ENCODE measurements at regions of chr6 and their contacts with region 1.

Region 1: GRCh38 chr6:156963712-156964700 is 186.8 kb downstream of the ARID1B start:
- DNase-seq: peak; percentile 30
- ATAC-seq: peak; percentile 90
- H3K4me3 ChIP-seq: no peak overlapping the region
- H3K27ac ChIP-seq: no peak overlapping the region; the same call in 1 of the 2 replicates
- H3K4me1 ChIP-seq: peaks cover 11% of the 10 kb centered on the region
- H3K27me3 ChIP-seq: no peaks in the 10 kb centered on the region
- CTCF ChIP-seq: no peak
- EP300 ChIP-seq: no peak
- POLR2A ChIP-seq: no peak
- RAD21 ChIP-seq: no peak

Region 2: DNA sequence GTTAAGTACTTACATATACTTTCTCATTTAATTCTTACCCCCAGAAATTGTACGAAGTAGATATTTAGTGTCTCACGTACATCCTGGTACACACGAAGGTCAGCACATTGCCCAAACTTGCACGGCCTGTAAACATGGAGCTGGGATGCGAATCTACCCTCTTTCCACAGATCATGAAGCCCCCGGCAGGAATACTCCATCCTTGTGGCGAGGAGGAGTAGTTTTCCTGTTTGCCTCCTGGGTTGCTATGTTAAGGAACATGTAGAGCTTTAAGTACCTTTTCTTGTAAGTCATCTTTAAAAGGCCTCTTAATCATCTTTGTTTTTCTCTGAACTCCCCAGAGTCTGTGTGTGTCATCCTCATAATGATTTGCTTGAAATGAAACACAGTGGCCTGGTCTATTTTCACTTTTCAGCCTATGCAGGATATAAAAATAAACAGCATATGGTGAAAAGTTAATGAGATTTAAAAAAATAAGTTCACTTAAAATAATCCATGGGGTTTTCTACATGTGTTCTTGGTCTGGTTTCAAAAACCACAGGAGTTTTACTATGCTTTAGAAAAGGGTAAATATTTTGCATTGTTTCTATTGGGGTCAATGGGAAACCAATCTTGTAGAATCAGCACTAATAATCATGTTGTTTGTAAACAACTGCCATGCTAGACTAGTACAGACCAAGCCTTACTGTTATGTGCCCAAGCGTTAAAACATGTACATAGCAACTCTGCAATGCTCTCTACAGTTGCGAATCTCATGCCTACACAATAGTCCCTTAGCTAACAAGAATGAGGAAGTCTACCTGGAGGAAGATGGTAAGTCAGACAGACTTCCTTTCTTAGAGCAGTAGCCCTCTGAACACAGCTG is 196.2 kb before region 1 on chr6:
- CTCF ChIA-PET with region 1: no interaction called
- POLR2A ChIA-PET with region 1: no interaction called
- RAD21 ChIA-PET with region 1: no interaction called
- SMC1A ChIA-PET with region 1: no interaction called
- in situ Hi-C with region 1: no loop called
- intact Hi-C with region 1: no loop called
- DNase-seq: peak; percentile 90
- ATAC-seq: peak; percentile 96
- H3K4me3 ChIP-seq: peak overlapping the region; percentile 56; the same call in 1 of the 2 replicates
- H3K27ac ChIP-seq: peak overlapping the region; percentile 63
- H3K4me1 ChIP-seq: peaks cover 19% of the 10 kb centered on the region
- H3K27me3 ChIP-seq: no peaks in the 10 kb centered on the region
- CTCF ChIP-seq: no peak
- EP300 ChIP-seq: peak; percentile 20 to 54; a peak in 3 of 4 replicates
- POLR2A ChIP-seq: no peak
- RAD21 ChIP-seq: 0 out of 2 replicates have a peak, but pooled peaks have one; percentile 15

Region 3: DNA sequence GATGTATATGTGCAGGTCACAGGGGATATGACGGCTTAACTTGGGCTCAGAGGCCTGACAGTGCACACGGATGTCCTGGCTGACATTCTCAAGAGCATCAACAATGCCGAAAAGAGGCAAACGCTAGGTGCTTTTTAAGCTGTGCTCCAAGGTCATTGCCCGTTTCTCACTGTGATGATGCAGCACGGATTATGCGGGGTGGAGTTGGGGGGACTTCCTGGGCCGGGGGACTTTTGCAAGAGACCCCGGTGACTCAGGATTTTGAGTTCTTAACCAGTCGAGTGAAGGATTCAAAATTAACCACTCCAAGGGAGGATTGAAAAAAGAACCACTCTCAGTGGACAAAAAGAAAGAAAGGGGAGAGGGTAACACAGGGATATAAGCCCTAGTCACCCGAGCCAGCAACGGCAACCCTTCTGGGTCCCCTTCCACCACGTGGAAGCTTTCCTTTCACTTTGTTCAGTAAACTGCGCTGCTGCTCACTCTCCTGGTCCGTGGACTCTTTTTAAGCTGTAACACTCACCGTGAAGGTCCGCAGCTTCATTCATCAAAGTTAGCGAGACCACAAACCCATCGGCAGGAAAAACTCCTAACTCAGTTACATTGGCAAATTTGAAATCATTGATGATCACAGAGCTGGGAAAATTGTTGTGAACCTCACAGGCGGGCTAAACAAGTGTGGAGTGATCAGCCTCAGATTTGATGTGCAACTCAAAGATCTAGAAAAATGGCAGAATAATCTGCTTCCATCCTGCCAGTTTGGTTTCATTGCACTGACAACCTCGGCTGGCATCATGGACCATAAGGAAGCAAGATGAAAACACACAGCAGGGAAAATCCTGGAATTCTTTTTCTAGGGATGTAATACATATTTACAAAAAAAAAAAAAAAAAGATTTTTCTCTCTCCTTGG is 12.5 kb after region 1 on chr6:
- CTCF ChIA-PET with region 1: interaction called, 11 read pairs
- POLR2A ChIA-PET with region 1: interaction called, 4 read pairs
- RAD21 ChIA-PET with region 1: interaction called, 4 read pairs
- SMC1A ChIA-PET with region 1: interaction called, 17 read pairs
- in situ Hi-C with region 1: no loop called
- intact Hi-C with region 1: no loop called
- DNase-seq: no peak
- ATAC-seq: peak; percentile 66
- H3K4me3 ChIP-seq: 0 out of 2 replicates have a peak overlapping the region, but pooled peaks have one; percentile 51
- H3K27ac ChIP-seq: peak overlapping the region; percentile 47; the same call in 1 of the 2 replicates
- H3K4me1 ChIP-seq: peaks cover 47% of the 10 kb centered on the region
- H3K27me3 ChIP-seq: no peaks in the 10 kb centered on the region
- CTCF ChIP-seq: no peak
- EP300 ChIP-seq: no peak
- POLR2A ChIP-seq: no peak
- RAD21 ChIP-seq: no peak

Region 4: DNA sequence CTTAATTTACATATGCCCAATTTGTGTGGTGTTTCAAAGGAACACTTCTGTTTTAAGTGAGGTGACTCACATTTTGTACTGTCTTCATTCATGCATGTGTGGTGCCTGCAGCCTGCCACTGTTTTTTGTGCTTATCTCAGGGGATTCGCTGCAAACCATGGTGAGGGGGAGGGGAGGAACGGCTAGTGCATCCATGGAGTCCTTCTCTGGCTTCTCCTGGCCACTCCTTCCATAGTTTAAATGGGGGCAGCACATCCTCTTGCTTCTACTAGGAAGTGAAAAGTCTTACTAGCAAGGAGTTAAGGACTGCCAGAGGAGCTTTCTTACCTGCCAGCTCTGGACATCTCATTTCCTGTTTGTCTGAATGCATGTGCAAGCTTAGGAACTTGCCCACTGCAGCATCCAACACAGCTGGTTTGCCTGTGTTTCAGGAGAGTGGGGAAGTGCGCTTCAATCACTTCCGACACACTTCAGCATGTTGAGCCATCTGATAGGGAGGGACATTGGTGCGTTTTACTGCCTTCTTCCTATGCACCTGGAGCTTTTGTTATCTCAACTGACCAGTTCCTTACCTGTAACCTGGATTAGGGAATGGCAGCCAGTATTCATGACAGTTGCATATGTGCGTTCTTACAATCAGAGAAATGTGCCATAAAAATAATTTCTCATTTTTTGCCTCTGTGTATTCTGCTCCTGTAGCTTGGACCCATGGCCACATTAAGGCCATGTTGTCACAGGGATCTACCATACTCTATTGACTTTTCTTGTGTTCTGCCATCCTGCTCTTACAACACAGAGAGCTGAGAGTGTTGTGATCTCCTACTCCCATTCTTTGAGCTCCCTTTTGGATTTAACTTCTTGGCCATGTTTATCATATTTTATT is 24.5 kb after region 1 on chr6:
- CTCF ChIA-PET with region 1: interaction called, 3 read pairs
- POLR2A ChIA-PET with region 1: interaction called, 3 read pairs
- RAD21 ChIA-PET with region 1: interaction called, 4 read pairs
- SMC1A ChIA-PET with region 1: interaction called, 11 read pairs
- in situ Hi-C with region 1: no loop called
- intact Hi-C with region 1: no loop called
- DNase-seq: peak; percentile 57
- ATAC-seq: peak; percentile 84
- H3K4me3 ChIP-seq: peak overlapping the region; percentile 27; the same call in 1 of the 2 replicates
- H3K27ac ChIP-seq: peak overlapping the region; percentile 50
- H3K4me1 ChIP-seq: peaks cover 31% of the 10 kb centered on the region
- H3K27me3 ChIP-seq: no peaks in the 10 kb centered on the region
- CTCF ChIP-seq: no peak
- EP300 ChIP-seq: no peak
- POLR2A ChIP-seq: peak; percentile 36; the same call in 1 of the 2 replicates
- RAD21 ChIP-seq: no peak

Region 5: DNA sequence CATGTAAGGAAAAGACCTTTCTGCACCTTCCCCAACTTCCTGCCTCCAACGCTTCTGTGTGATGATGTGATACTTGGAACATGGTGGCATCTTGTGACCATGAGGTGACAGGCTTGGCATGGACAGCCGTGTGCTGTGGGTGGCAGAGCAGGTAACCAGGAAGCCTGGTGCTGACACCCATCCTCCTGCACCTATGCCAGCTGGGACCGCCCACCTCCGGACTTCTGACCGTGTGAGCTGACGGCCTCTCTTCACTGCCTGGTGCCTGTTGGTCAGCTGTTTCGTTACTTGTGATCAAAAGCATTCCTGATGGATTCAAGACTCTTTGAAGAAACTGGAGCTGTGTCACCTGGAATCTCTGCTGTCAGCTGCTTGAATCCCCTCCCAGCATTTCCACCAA is 289.0 kb after region 1 on chr6:
- CTCF ChIA-PET with region 1: no interaction called
- POLR2A ChIA-PET with region 1: no interaction called
- RAD21 ChIA-PET with region 1: no interaction called
- SMC1A ChIA-PET with region 1: no interaction called
- in situ Hi-C with region 1: no loop called
- intact Hi-C with region 1: no loop called
- DNase-seq: no peak
- ATAC-seq: no peak
- H3K4me3 ChIP-seq: no peak overlapping the region
- H3K27ac ChIP-seq: no peak overlapping the region
- H3K4me1 ChIP-seq: no peaks in the 10 kb centered on the region
- H3K27me3 ChIP-seq: peaks cover 1 to 4% of the 10 kb centered on the region in 2 experiments; a peak in 2 of 4 replicates
- CTCF ChIP-seq: no peak
- EP300 ChIP-seq: no peak
- POLR2A ChIP-seq: no peak
- RAD21 ChIP-seq: no peak

Measured in GM12878 (cell line).